ENCODE measurements at regions of chr19 and their contacts with region 1.

Region 1: DNA sequence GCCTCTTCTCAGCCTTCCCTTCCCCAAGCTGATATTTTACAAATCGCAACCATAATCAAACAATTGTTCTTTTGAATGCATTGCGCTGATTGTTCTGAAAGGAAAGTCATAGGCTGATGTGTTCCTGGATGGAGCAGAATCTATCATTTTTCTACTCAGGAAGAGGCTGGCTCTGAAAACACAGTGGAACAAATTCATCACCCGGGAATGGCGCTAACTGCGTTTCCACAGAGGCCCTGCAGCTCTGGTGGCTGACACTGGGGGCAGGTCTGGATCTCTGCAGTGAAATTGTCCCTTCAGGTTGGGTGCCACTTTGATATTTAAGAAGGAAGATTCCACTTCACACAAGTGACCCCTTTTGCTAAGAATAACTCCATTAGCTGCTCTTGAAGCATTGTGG is 1060.8 kb downstream of the UQCRFS1 start:
- DNase-seq: no peak
- ATAC-seq: no peak
- H3K4me3 ChIP-seq: no peak overlapping the region
- H3K27ac ChIP-seq: no peak overlapping the region
- H3K4me1 ChIP-seq: no peaks in the 10 kb centered on the region
- H3K27me3 ChIP-seq: no peaks in the 10 kb centered on the region
- CTCF ChIP-seq: no peak
- EP300 ChIP-seq: no peak
- POLR2A ChIP-seq: no peak
- RAD21 ChIP-seq: no peak

Region 2: GRCh38 chr19:27935669-27936068 is 216.5 kb before region 1 on chr19:
- CTCF ChIA-PET with region 1: no interaction called
- POLR2A ChIA-PET with region 1: no interaction called
- RAD21 ChIA-PET with region 1: no interaction called
- SMC1A ChIA-PET with region 1: no interaction called
- in situ Hi-C with region 1: no loop called
- intact Hi-C with region 1: no loop called
- DNase-seq: no peak
- ATAC-seq: no peak
- H3K4me3 ChIP-seq: no peak overlapping the region
- H3K27ac ChIP-seq: no peak overlapping the region
- H3K4me1 ChIP-seq: no peaks in the 10 kb centered on the region
- H3K27me3 ChIP-seq: no peaks in the 10 kb centered on the region
- CTCF ChIP-seq: no peak
- EP300 ChIP-seq: no peak
- POLR2A ChIP-seq: no peak
- RAD21 ChIP-seq: no peak

Region 3: DNA sequence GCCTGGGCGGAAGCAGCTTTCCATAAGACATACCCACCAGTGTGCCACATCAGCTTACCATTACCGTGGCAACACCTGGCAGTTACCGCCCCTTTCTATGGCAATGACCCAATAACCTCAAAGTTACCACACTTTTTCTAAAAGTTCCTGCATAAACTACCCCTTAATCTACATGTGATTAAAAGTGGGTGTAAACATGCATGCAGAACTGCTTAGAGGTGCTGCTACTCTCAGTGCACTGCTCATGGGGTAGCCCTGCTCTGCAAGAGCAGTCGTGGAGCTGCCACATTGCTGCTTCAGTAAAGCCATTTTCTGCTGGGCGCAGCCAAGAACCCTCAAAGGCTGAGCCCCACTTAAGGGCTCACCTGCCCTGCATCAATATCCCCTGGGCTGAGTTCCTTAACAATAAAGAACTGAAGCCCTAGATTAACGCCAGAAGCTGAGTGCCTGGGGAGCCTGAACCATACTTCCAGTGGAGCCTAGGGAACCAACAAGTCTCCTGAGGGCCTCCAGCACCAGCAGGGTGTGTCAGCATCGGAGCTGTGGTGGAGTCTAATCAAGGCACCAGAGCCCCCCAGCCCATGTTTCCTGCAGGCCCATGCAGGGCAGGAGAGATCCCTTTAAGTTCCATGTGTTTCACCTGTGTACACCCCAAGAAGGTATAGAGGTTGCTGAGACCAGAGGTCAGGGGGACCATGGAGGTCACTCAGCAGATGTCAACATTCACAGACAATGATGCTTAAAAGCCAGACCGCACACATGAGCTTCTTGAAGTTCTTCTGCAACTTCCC is 137.4 kb before region 1 on chr19:
- CTCF ChIA-PET with region 1: interaction called, 31 read pairs
- POLR2A ChIA-PET with region 1: interaction called, 4 read pairs
- RAD21 ChIA-PET with region 1: interaction called, 12 read pairs
- SMC1A ChIA-PET with region 1: interaction called, 26 read pairs
- in situ Hi-C with region 1: no loop called
- intact Hi-C with region 1: no loop called
- DNase-seq: no peak
- ATAC-seq: no peak; the same call in 2 of the 3 replicates
- H3K4me3 ChIP-seq: no peak overlapping the region
- H3K27ac ChIP-seq: no peak overlapping the region
- H3K4me1 ChIP-seq: no peaks in the 10 kb centered on the region; the same call in 1 of the 2 replicates
- H3K27me3 ChIP-seq: no peaks in the 10 kb centered on the region
- CTCF ChIP-seq: no peak
- EP300 ChIP-seq: no peak
- POLR2A ChIP-seq: no peak
- RAD21 ChIP-seq: no peak

Region 4: GRCh38 chr19:28130066-28130511 is 22.1 kb before region 1 on chr19:
- CTCF ChIA-PET with region 1: interaction called, 5 read pairs
- POLR2A ChIA-PET with region 1: interaction called, 3 read pairs
- RAD21 ChIA-PET with region 1: interaction called, 10 read pairs
- SMC1A ChIA-PET with region 1: interaction called, 6 read pairs
- in situ Hi-C with region 1: no loop called
- intact Hi-C with region 1: no loop called
- DNase-seq: peak; percentile 15
- ATAC-seq: peak; percentile 75
- H3K4me3 ChIP-seq: no peak overlapping the region
- H3K27ac ChIP-seq: no peak overlapping the region
- H3K4me1 ChIP-seq: no peaks in the 10 kb centered on the region
- H3K27me3 ChIP-seq: no peaks in the 10 kb centered on the region
- CTCF ChIP-seq: no peak
- EP300 ChIP-seq: no peak
- POLR2A ChIP-seq: no peak
- RAD21 ChIP-seq: no peak

Region 5: GRCh38 chr19:28135825-28136224 is 16.4 kb before region 1 on chr19:
- CTCF ChIA-PET with region 1: no interaction called
- POLR2A ChIA-PET with region 1: interaction called, 5 read pairs
- RAD21 ChIA-PET with region 1: interaction called, 5 read pairs
- SMC1A ChIA-PET with region 1: interaction called, 17 read pairs
- in situ Hi-C with region 1: no loop called
- intact Hi-C with region 1: no loop called
- DNase-seq: no peak
- ATAC-seq: no peak
- H3K4me3 ChIP-seq: no peak overlapping the region
- H3K27ac ChIP-seq: no peak overlapping the region
- H3K4me1 ChIP-seq: no peaks in the 10 kb centered on the region
- H3K27me3 ChIP-seq: no peaks in the 10 kb centered on the region
- CTCF ChIP-seq: no peak
- EP300 ChIP-seq: no peak
- POLR2A ChIP-seq: no peak
- RAD21 ChIP-seq: no peak

Region 6: DNA sequence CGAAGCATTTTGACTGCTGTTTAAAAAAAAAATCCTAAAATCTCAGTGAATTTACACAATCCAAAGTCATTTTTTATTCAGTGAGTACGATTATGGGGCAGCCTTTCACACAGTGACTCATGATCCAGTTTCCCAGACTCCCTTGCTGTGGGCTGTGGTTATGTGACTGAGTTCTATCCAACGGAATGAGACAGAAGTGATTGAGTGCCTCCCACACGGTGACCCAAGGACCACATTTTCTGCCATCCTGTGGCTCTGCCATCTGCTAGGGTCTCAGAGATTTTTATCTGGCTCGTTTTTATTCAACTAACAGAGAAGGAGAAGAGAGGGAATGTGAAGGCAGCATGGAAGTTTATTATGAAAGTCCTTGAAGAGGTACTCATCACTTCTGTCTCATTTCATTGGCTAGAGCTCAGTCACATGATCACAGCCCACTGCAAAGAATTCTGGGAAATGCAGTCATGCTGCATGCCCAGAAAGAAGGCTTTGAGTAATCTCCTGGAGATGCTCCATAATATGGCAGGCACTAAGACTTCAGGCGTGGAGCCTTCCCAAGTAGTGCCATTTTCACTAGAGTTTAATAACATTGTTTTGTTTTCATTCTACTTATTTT is 61.4 kb after region 1 on chr19:
- CTCF ChIA-PET with region 1: interaction called, 4 read pairs
- POLR2A ChIA-PET with region 1: interaction called, 3 read pairs
- RAD21 ChIA-PET with region 1: interaction called, 12 read pairs
- SMC1A ChIA-PET with region 1: interaction called, 6 read pairs
- in situ Hi-C with region 1: no loop called
- intact Hi-C with region 1: no loop called
- DNase-seq: no peak
- ATAC-seq: no peak
- H3K4me3 ChIP-seq: no peak overlapping the region
- H3K27ac ChIP-seq: no peak overlapping the region
- H3K4me1 ChIP-seq: no peaks in the 10 kb centered on the region
- H3K27me3 ChIP-seq: no peaks in the 10 kb centered on the region
- CTCF ChIP-seq: no peak
- EP300 ChIP-seq: no peak
- POLR2A ChIP-seq: no peak
- RAD21 ChIP-seq: no peak

Region 7: DNA sequence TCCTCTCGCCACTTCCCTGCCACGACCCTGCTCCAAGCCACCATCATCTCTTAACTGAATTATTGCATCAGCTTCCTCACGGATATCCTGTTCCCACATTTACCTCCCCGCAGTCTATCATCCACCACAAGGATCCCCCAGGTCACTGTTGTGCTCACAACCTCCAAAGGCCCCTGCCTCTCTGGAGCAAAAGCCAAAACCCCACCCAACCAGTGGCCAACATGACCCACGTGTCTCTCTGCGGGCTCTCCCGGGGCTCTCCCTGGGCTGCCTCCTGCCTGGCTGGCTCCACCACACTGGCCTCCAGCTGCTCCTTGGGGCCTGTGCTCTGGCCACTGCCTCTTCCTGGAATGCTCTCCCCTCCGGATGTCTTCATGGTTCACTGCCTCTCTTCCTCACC is 251.5 kb after region 1 on chr19:
- CTCF ChIA-PET with region 1: no interaction called
- POLR2A ChIA-PET with region 1: no interaction called
- RAD21 ChIA-PET with region 1: no interaction called
- SMC1A ChIA-PET with region 1: no interaction called
- in situ Hi-C with region 1: no loop called
- intact Hi-C with region 1: no loop called
- DNase-seq: no peak
- ATAC-seq: no peak
- H3K4me3 ChIP-seq: no peak overlapping the region
- H3K27ac ChIP-seq: no peak overlapping the region
- H3K4me1 ChIP-seq: no peaks in the 10 kb centered on the region
- H3K27me3 ChIP-seq: no peaks in the 10 kb centered on the region
- CTCF ChIP-seq: no peak
- EP300 ChIP-seq: no peak
- POLR2A ChIP-seq: no peak
- RAD21 ChIP-seq: no peak